Activated naive CD8-positive, alpha-beta T cell treated with anti-CD3 and anti-CD28 coated beads, Interleukin-2, amount 10 ng/mL, durations not matched to agents 7 days and 5 days (primary cell): ENCODE measurements at regions of chr5 and their contacts with region 1.

Region 1: DNA sequence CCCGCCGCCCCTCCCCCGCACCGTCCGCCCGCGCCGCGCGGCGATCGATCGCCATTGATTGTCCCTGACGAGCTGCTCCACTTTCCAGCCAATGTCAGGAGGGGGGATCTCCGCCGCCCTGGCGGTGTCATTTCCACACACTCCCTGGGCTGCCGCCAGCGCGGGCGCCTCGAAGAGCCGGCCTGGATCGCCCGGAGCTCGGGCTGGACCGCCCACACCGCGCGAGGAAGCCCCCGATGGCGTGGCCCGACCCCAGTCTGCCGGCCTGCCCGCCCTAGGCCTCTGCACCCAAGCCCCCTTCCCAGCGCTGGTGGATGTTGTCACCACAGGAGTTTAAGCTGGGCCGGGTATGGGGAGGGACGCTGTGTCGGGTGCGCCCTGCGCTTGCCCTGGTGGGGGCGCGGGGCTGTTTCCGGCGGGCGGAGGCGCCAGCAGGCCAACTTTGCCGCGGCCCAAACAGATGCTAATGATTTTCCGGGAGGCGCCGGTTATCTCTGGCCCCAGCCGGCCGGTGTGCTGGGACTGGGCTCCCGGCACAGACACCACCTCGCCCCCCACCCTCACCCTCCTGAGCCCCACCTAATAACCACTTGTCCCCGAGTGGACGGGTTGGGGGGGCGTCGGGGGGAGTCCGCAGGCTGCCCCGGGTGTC is 10.6 kb upstream of the CXXC5 start:
- DNase-seq: peak; percentile 56
- ATAC-seq: peak; percentile 8
- H3K4me3 Mint-ChIP-seq: peak overlapping the region; percentile 45
- H3K27ac Mint-ChIP-seq: no peak overlapping the region
- H3K4me1 Mint-ChIP-seq: peaks cover 36% of the 10 kb centered on the region
- H3K27me3 Mint-ChIP-seq: no peaks in the 10 kb centered on the region

Region 2: GRCh38 chr5:139648205-139649081 is 10.9 kb after region 1 on chr5 and contains the start of gene CXXC5:
- POLR2A ChIA-PET with region 1: interaction called, 14 read pairs
- DNase-seq: peak; percentile 75
- ATAC-seq: peak; percentile 59
- H3K4me3 Mint-ChIP-seq: peak within 1 kb of the TSS; percentile 60
- H3K27ac Mint-ChIP-seq: no peak within 1 kb of the TSS
- H3K4me1 Mint-ChIP-seq: peaks cover 33% of the 10 kb centered on the region
- H3K27me3 Mint-ChIP-seq: peaks cover 65% of the 10 kb centered on the region
- total RNA-seq, gene CXXC5: 3.5 to 4.6 TPM

Region 3: DNA sequence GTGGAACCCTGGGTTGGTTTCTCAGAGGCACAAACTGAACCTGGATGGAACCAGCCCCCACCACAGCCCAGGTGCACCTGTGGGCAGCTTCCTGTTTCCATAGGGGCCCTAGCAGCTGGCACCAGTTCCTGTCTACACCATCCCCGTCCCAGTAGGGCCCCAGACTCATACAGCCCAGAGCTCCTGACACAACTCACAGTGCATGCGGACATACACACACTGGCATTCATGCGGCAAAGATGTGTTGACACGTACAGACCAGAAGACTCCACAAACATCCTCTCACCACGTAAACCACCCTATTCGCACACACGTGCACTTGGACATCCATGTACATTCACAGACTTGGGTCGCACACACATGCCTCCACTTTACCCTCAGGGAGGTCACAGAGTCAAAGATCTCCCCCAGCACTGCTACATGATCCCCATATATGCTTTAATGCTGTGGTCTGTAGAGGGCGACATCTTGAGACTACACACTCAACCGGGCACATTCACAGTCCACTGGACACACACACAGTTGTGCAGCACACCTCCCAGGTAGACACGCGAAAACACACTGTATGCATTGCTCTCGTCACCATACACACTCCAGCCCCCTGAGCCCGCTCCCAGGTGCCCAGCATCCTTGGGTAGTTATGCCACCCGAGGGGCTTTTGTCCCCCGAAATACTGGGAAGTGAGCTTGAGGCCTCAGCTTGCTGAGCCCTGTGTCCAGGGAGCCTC is 33.0 kb after region 1 on chr5:
- POLR2A ChIA-PET with region 1: interaction called, 14 read pairs
- DNase-seq: peak; percentile 59
- ATAC-seq: peak; percentile 28
- H3K4me3 Mint-ChIP-seq: peak overlapping the region; percentile 84
- H3K27ac Mint-ChIP-seq: peak overlapping the region; percentile 82
- H3K4me1 Mint-ChIP-seq: peaks cover 38% of the 10 kb centered on the region
- H3K27me3 Mint-ChIP-seq: no peaks in the 10 kb centered on the region

Region 4: GRCh38 chr5:139690064-139690802 is 52.7 kb after region 1 on chr5:
- POLR2A ChIA-PET with region 1: interaction called, 14 read pairs
- DNase-seq: no peak
- ATAC-seq: peak; percentile 34
- H3K4me3 Mint-ChIP-seq: no peak overlapping the region
- H3K27ac Mint-ChIP-seq: no peak overlapping the region
- H3K4me1 Mint-ChIP-seq: peaks cover 2% of the 10 kb centered on the region
- H3K27me3 Mint-ChIP-seq: peaks cover 5% of the 10 kb centered on the region